ENCODE measurements at regions of chr12 and their contacts with region 1.

Region 1: GRCh38 chr12:51871126-51871525 is 16.8 kb upstream of the ANKRD33 start:
- DNase-seq: peak in 1 of 3 donors; percentile 55
- ATAC-seq: peak in 3 of 4 donors; percentile 8 to 44 (median 35)
- H3K4me3 ChIP-seq: no peak overlapping the region
- H3K27ac ChIP-seq: no peak overlapping the region
- H3K4me1 ChIP-seq: peaks cover 0 to 10% (median 0%) of the 10 kb centered on the region in 4 donors
- H3K27me3 ChIP-seq: no peaks in the 10 kb centered on the region
- CTCF ChIP-seq: no peak
- POLR2A ChIP-seq: no peak

Region 2: GRCh38 chr12:51823875-51824565 is 47.1 kb before region 1 on chr12:
- intact Hi-C with region 1: loop called in 1 of 2 experiments (anchors 10 kb)
- DNase-seq: no peak
- ATAC-seq: peak; percentile 59 to 80 (median 74)
- H3K4me3 ChIP-seq: no peak overlapping the region
- H3K27ac ChIP-seq: no peak overlapping the region
- H3K4me1 ChIP-seq: peaks cover 0 to 8% (median 2%) of the 10 kb centered on the region in 4 donors
- H3K27me3 ChIP-seq: no peaks in the 10 kb centered on the region
- CTCF ChIP-seq: peak; percentile 51 to 69 (median 60)
- POLR2A ChIP-seq: no peak

Measured in right lobe of liver (tissue), 6 donors.